ENCODE measurements at regions of chr13 and their contacts with region 1.

Region 1: DNA sequence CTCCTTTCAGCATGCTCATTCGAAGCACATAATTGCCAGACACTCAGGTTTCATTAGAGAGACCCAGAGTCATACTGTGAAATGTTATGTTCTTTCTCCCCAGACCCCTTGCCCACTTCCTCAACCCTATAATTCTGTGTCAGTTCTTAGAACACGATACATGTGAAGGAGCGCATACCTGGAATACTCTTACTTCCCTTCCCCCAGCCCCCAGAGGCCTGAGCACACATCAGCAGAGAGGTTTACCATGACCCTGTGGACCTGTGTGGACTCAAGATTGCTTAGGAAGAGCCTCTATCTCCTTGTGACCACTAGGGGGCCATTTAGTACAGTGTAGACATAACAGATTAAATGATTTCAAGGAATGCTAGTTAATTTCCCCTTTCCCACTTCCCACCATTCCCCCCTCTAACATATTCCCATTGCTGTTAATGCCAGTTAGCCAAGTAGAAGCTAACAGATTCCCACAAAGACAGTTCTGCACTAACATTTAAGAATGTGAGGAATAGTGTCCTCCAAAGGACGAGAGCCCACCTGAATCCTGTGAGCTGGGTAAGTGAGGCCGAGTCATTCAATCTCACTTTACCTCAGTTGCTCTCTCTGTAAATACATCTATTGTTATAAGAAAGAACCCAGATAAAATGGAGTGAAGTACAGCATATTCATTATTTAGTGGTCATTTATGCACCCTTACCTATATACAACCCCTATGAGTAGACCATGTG is 154.2 kb upstream of the MAB21L1 start:
- DNase-seq: no peak
- H3K4me3 ChIP-seq: no peak overlapping the region
- H3K27ac ChIP-seq: no peak overlapping the region
- H3K4me1 ChIP-seq: peaks cover 0 to 5% (median 2%) of the 10 kb centered on the region in 4 experiments; a peak in 3 of 7 replicates
- H3K27me3 ChIP-seq: no peaks in the 10 kb centered on the region
- CTCF ChIP-seq: peak; percentile 25 to 86 (median 64)
- EP300 ChIP-seq: no peak
- POLR2A ChIP-seq: no peak
- RAD21 ChIP-seq: peak; percentile 63 to 65

Region 2: GRCh38 chr13:35475960-35476943 is 154.5 kb before region 1 on chr13 and contains the start of gene MAB21L1:
- CTCF ChIA-PET with region 1: no interaction called
- POLR2A ChIA-PET with region 1: no interaction called
- DNase-seq: peak in 1 of 2 experiments; percentile 59
- H3K4me3 ChIP-seq: peak within 1 kb of the TSS; percentile 41 to 63 (median 48)
- H3K27ac ChIP-seq: no peak within 1 kb of the TSS
- H3K4me1 ChIP-seq: peaks cover 13 to 40% (median 28%) of the 10 kb centered on the region in 4 experiments
- H3K27me3 ChIP-seq: peaks cover 46 to 80% (median 62%) of the 10 kb centered on the region in 4 experiments
- CTCF ChIP-seq: no peak
- EP300 ChIP-seq: no peak
- POLR2A ChIP-seq: no peak
- RAD21 ChIP-seq: no peak
- total RNA-seq, gene MAB21L1: not detected in 2 replicates

Region 3: DNA sequence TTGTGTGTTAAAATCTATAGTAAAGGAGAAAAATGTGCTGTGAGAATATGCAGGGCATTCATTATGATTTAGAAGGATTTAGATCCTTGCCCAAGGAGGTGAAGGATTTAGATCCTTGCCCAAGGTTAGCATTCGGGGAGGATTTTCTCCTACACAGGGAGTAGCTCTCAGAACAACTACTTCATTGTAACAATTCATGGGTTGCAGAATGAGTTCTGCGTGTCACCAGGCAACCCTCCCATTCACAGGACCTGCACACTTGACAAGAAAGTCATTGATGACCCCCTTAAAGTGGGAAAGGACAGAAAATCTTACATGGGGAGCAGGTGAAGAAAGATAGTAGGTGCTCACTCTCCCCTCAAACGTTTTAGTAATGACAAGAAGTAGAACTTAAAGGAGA is 12.9 kb after region 1 on chr13:
- CTCF ChIA-PET with region 1: interaction called, 17 read pairs
- POLR2A ChIA-PET with region 1: no interaction called
- DNase-seq: no peak
- H3K4me3 ChIP-seq: no peak overlapping the region
- H3K27ac ChIP-seq: no peak overlapping the region
- H3K4me1 ChIP-seq: no peaks in the 10 kb centered on the region
- H3K27me3 ChIP-seq: no peaks in the 10 kb centered on the region
- CTCF ChIP-seq: no peak
- EP300 ChIP-seq: no peak
- POLR2A ChIP-seq: no peak
- RAD21 ChIP-seq: no peak

Region 4: GRCh38 chr13:35649162-35649561 is 18.4 kb after region 1 on chr13:
- CTCF ChIA-PET with region 1: interaction called, 16 read pairs
- POLR2A ChIA-PET with region 1: no interaction called
- DNase-seq: no peak
- H3K4me3 ChIP-seq: no peak overlapping the region
- H3K27ac ChIP-seq: no peak overlapping the region
- H3K4me1 ChIP-seq: no peaks in the 10 kb centered on the region
- H3K27me3 ChIP-seq: no peaks in the 10 kb centered on the region
- CTCF ChIP-seq: no peak
- EP300 ChIP-seq: no peak
- POLR2A ChIP-seq: no peak
- RAD21 ChIP-seq: no peak

Region 5: DNA sequence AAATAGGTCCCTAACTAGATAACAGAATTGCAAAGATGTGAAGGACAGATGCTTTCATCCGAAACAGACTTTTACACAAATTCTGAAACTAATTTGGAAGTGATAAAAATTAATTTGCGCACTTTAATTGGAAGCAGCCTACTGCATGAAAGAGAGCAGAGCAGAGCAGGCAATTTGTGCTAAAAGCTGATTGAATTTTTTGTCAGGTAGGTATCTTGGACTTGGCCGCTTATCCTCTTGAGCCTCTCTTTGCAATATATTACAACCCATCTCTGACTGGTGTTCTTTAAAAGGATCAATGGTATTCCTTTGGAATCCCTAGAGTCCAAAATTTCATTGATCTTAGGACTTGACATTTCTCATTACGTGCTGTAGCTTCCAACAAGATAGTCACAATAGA is 29.1 kb after region 1 on chr13:
- CTCF ChIA-PET with region 1: interaction called, 11 read pairs
- POLR2A ChIA-PET with region 1: no interaction called
- DNase-seq: no peak
- H3K4me3 ChIP-seq: no peak overlapping the region
- H3K27ac ChIP-seq: no peak overlapping the region
- H3K4me1 ChIP-seq: no peaks in the 10 kb centered on the region
- H3K27me3 ChIP-seq: no peaks in the 10 kb centered on the region
- CTCF ChIP-seq: no peak
- EP300 ChIP-seq: no peak
- POLR2A ChIP-seq: no peak
- RAD21 ChIP-seq: no peak

Region 6: GRCh38 chr13:35712907-35713761 is 82.4 kb after region 1 on chr13:
- CTCF ChIA-PET with region 1: interaction called, 21 read pairs
- POLR2A ChIA-PET with region 1: no interaction called
- DNase-seq: no peak
- H3K4me3 ChIP-seq: no peak overlapping the region
- H3K27ac ChIP-seq: no peak overlapping the region
- H3K4me1 ChIP-seq: no peaks in the 10 kb centered on the region; a peak in 1 of 7 replicates
- H3K27me3 ChIP-seq: no peaks in the 10 kb centered on the region
- CTCF ChIP-seq: no peak
- EP300 ChIP-seq: no peak
- POLR2A ChIP-seq: no peak
- RAD21 ChIP-seq: no peak

Region 7: GRCh38 chr13:35720690-35721554 is 90.2 kb after region 1 on chr13:
- CTCF ChIA-PET with region 1: interaction called, 21 read pairs
- POLR2A ChIA-PET with region 1: no interaction called
- DNase-seq: peak; percentile 60 to 93
- H3K4me3 ChIP-seq: no peak overlapping the region
- H3K27ac ChIP-seq: no peak overlapping the region
- H3K4me1 ChIP-seq: no peaks in the 10 kb centered on the region
- H3K27me3 ChIP-seq: no peaks in the 10 kb centered on the region
- CTCF ChIP-seq: peak; percentile 94 to 98 (median 96)
- EP300 ChIP-seq: no peak
- POLR2A ChIP-seq: no peak
- RAD21 ChIP-seq: peak; percentile 99

Measured in H1 (cell line).